ENCODE measurements at regions of chr16 and their contacts with region 1.

Region 1: GRCh38 chr16:75110637-75111513 is 5.7 kb downstream of the LDHD start:
- DNase-seq: peak; percentile 88
- H3K4me3 Mint-ChIP-seq: peak overlapping the region; percentile 57
- H3K27ac Mint-ChIP-seq: peak overlapping the region; percentile 88
- H3K4me1 Mint-ChIP-seq: peaks cover 61% of the 10 kb centered on the region
- H3K27me3 Mint-ChIP-seq: no peaks in the 10 kb centered on the region

Region 2: GRCh38 chr16:74813109-74813641 is 297.7 kb before region 1 on chr16:
- CTCF ChIA-PET with region 1: interaction called, 19 read pairs
- POLR2A ChIA-PET with region 1: interaction called, 3 read pairs
- DNase-seq: peak; percentile 72
- H3K4me3 Mint-ChIP-seq: no peak overlapping the region
- H3K27ac Mint-ChIP-seq: no peak overlapping the region
- H3K4me1 Mint-ChIP-seq: no peaks in the 10 kb centered on the region
- H3K27me3 Mint-ChIP-seq: peaks cover 3% of the 10 kb centered on the region

Region 3: DNA sequence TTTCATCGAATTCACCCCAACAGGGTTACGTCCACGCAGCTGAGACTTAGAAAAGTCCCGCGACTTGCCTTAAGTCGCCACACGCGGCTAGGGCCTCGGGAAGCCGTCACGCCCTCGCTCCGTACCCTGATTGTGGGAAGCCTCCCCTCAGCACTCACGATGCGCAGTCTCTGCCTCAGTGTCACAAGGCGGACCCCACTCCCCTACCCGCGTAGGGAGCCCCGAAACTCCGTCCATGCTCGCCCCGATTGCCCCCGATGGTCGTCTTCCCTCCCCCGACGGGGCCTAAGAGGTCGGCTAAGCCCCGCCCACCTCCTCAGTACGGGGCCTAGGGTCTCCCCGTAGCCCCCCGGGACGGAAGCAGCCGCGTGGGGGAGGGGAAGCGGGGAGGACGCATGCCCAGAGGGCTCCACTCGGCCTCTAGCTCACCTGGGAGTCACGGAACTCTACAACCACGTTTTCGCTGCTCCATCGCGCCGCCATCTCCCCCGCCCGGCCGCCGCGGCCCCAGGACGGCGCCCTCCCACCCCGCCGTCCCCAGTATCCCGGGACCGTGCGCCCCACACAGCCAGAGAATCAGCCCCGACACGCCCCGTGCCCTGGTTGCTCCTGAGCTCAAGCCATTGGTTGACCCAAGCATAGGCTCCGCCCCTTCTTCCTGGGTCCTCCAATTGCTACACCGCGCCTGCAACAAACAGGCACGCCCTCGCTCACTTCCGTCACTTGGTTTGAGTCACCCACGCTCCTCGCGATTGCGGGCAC is 126.2 kb before region 1 on chr16 and contains the start of gene WDR59:
- CTCF ChIA-PET with region 1: interaction called, 73 read pairs
- POLR2A ChIA-PET with region 1: interaction called, 5 read pairs
- DNase-seq: peak; percentile 99
- H3K4me3 Mint-ChIP-seq: peak within 1 kb of the TSS; percentile 99
- H3K27ac Mint-ChIP-seq: peak within 1 kb of the TSS; percentile 86
- H3K4me1 Mint-ChIP-seq: peaks cover 25% of the 10 kb centered on the region
- H3K27me3 Mint-ChIP-seq: no peaks in the 10 kb centered on the region
- total RNA-seq, gene WDR59: 67.1 to 72.3 TPM

Region 4: GRCh38 chr16:75005499-75006096 is 105.3 kb before region 1 on chr16:
- CTCF ChIA-PET with region 1: interaction called, 62 read pairs
- POLR2A ChIA-PET with region 1: interaction called, 23 read pairs
- DNase-seq: no peak
- H3K4me3 Mint-ChIP-seq: no peak overlapping the region
- H3K27ac Mint-ChIP-seq: no peak overlapping the region
- H3K4me1 Mint-ChIP-seq: peaks cover 32% of the 10 kb centered on the region
- H3K27me3 Mint-ChIP-seq: no peaks in the 10 kb centered on the region

Region 5: GRCh38 chr16:75019007-75019406 is 91.9 kb before region 1 on chr16:
- CTCF ChIA-PET with region 1: interaction called, 10 read pairs
- POLR2A ChIA-PET with region 1: interaction called, 23 read pairs
- DNase-seq: no peak
- H3K4me3 Mint-ChIP-seq: no peak overlapping the region
- H3K27ac Mint-ChIP-seq: no peak overlapping the region
- H3K4me1 Mint-ChIP-seq: peaks cover 19% of the 10 kb centered on the region
- H3K27me3 Mint-ChIP-seq: no peaks in the 10 kb centered on the region

Region 6: DNA sequence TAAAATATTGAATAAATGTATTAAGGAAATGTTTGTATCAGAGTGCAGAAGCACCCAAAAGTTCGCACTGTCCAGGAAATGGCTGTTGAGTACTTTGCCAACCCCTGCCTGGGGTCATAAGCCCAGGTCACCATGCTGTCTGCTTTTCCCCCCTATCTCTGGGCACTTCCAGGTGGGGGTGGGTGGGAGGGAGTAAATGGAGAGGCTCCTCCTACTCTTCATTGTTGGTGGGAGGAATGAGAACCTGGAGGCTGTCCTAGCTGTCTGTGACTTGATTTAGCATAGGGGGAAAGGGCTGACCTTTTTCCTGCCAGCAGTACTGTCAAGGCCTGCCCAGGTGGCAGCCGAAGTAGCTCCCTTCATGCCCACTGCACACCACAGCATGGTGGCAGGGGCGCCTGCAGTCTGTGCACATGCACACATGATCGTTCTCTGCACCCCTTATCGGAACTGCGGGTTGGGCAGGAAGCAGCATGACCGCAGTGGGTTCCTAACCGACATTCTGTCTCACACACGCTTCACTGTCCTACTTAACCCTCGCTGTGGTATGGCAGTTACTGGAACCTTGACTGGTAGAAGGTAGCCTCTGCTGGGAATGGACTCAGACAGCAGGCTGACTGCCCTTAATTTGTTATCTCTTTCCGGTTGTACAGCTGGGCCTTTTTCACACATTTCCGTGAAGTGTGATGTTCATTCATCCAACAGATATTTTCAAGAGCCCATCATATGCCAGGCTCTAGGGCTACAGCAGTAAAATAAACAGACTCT is 35.8 kb before region 1 on chr16:
- CTCF ChIA-PET with region 1: interaction called, 34 read pairs
- POLR2A ChIA-PET with region 1: interaction called, 54 read pairs
- DNase-seq: peak; percentile 94
- H3K4me3 Mint-ChIP-seq: peak overlapping the region; percentile 33
- H3K27ac Mint-ChIP-seq: peak overlapping the region; percentile 87
- H3K4me1 Mint-ChIP-seq: peaks cover 58% of the 10 kb centered on the region
- H3K27me3 Mint-ChIP-seq: no peaks in the 10 kb centered on the region

Region 7: GRCh38 chr16:75130150-75130771 is 19.4 kb after region 1 on chr16:
- CTCF ChIA-PET with region 1: interaction called, 10 read pairs
- POLR2A ChIA-PET with region 1: no interaction called
- DNase-seq: no peak
- H3K4me3 Mint-ChIP-seq: no peak overlapping the region
- H3K27ac Mint-ChIP-seq: no peak overlapping the region
- H3K4me1 Mint-ChIP-seq: peaks cover 2% of the 10 kb centered on the region
- H3K27me3 Mint-ChIP-seq: peaks cover 2% of the 10 kb centered on the region

Measured in activated CD4-positive, alpha-beta memory T cell treated with anti-CD3 and anti-CD28 coated beads, Interleukin-2, amount 10 ng/mL, durations not matched to agents 7 days and 5 days (primary cell).